B cell (primary cell): ENCODE measurements at regions of chr6 and their contacts with region 1.

Region 1: DNA sequence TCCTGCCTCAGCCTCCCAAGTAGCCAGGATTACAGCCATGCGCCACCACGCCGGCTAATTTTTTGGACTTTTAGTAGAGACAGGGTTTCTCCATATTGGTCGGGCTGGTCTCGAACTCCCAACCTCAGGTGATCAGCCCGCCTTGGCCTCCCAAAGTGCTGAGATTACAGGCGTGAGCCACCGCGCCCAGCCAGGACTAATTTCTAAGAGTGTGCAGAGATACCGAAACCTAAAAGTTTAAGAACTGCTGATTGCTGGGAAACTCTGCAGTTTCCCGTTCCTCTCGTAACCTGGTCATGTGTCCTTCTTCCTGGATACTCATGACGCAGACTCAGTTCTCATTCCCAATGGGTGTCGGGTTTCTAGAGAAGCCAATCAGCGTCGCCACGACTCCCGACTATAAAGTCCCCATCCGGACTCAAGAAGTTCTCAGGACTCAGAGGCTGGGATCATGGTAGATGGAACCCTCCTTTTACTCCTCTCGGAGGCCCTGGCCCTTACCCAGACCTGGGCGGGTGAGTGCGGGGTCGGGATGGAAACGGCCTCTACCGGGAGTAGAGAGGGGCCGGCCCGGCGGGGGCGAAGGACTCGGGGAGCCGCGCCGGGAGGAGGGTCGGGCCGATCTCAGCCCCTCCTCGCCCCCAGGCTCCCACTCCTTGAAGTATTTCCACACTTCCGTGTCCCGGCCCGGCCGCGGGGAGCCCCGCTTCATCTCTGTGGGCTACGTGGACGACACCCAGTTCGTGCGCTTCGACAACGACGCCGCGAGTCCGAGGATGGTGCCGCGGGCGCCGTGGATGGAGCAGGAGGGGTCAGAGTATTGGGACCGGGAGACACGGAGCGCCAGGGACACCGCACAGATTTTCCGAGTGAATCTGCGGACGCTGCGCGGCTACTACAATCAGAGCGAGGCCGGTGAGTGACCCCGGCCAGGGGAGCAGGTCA is at the start of gene HLA-E:
- DNase-seq: peak; percentile 98
- ATAC-seq: peak; percentile 84
- H3K4me3 ChIP-seq: peak within 1 kb of the TSS; percentile 99 to 100 (median 100)
- H3K4me3 Mint-ChIP-seq: peak within 1 kb of the TSS; percentile 99
- H3K27ac ChIP-seq: peak within 1 kb of the TSS; percentile 97 to 98
- H3K27ac Mint-ChIP-seq: peak within 1 kb of the TSS; percentile 98
- H3K4me1 ChIP-seq: peaks cover 38 to 50% of the 10 kb centered on the region in 2 donors
- H3K4me1 Mint-ChIP-seq: peaks cover 56% of the 10 kb centered on the region
- H3K27me3 ChIP-seq: no peaks in the 10 kb centered on the region
- H3K27me3 Mint-ChIP-seq: no peaks in the 10 kb centered on the region
- CTCF ChIP-seq: no peak
- total RNA-seq, gene HLA-E: 1,023 and 1,043 TPM in 2 replicates

Region 2: DNA sequence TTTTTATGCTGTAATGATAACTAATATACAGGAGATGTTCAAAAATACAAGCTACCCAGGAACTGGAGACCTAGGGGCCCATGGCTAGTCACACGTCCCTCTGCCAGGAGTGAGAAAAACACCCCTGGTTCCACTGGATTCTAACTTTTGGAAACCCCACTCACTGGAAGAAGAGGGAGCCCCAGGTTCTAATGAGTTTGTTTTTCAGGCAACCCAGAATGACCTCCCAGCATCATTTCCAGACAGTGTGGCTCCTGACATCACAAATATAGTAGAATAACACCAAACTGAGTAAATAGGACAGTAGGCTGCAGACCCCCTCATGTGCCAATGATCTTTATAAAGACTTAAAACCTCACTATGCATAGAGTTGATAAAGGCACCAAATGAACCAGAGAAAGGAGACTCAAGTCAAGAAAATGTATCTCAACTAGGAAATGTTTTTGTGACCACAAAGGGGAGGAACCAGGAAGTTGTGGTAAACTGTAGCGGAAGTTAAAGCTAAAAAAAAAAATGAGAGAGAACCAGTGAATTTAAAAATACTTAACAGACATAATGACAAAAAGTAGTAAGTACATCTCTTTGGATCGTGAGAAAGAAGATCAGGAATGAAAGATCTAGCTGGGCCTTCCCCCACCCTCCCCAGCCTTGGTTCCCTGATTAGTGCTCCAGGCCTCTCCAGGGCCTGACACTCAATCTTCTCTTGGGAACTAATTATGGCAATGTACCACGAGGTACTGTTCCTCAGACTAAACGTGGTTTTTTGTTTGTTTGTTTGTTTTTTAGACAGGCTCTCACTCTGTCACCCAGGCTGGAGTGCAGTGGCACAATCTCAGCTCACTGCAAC is 19.8 kb after region 1 on chr6:
- CTCF ChIA-PET with region 1: interaction called, 45 read pairs
- POLR2A ChIA-PET with region 1: interaction called, 18 read pairs
- intact Hi-C with region 1: loop called (anchors 1 kb)
- DNase-seq: peak; percentile 84
- ATAC-seq: peak; percentile 62
- H3K4me3 ChIP-seq: peak overlapping the region; percentile 20 to 74 (median 46)
- H3K4me3 Mint-ChIP-seq: peak overlapping the region; percentile 68
- H3K27ac ChIP-seq: peak overlapping the region; percentile 73 to 74
- H3K27ac Mint-ChIP-seq: peak overlapping the region; percentile 84
- H3K4me1 ChIP-seq: peaks cover 76 to 83% of the 10 kb centered on the region in 2 donors
- H3K4me1 Mint-ChIP-seq: peaks cover 67% of the 10 kb centered on the region
- H3K27me3 ChIP-seq: no peaks in the 10 kb centered on the region
- H3K27me3 Mint-ChIP-seq: no peaks in the 10 kb centered on the region
- CTCF ChIP-seq: no peak

Region 3: DNA sequence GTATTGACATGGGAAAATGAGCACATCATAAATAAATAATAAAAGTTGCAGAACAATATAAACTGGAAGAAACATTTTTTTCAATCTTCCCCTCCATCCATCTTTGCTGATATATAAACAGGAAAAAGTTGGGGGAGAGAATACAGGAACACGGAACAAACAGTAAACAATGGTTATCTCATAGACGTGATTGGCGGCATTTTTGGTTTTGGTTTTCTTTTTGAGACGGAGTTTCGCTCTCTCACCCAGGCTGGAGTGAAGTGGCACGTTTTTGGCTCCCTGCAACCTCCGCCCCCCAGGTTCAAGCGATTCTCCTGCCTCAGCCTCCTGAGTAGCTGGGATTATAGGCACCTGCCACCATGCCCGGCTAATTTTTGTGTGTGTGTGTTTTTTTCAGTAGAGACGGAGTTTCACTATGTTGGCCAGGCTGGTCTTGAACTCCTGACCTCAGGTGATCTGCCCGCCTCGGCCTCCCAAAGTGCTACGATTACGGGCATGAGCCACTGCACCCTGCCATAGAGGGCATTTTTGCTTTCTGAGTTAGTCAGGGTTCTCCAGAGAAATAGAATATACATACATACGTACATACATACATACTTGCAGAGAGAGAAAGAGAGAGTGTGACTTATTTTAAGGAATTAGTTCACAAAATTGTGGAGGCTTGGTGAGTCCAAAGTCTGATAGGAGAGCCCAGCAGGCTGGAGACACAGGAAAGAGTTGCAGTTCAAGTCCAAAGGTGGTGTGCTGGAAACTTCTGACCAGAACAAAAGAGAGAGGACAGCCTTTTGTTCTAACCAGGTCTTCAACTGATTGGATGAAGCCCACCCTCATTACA is 44.3 kb after region 1 on chr6:
- CTCF ChIA-PET with region 1: interaction called, 681 read pairs
- POLR2A ChIA-PET with region 1: interaction called, 126 read pairs
- intact Hi-C with region 1: loop called (anchors 1 kb)
- DNase-seq: no peak
- ATAC-seq: no peak
- H3K4me3 ChIP-seq: no peak overlapping the region
- H3K4me3 Mint-ChIP-seq: peak overlapping the region; percentile 59
- H3K27ac ChIP-seq: no peak overlapping the region
- H3K27ac Mint-ChIP-seq: peak overlapping the region; percentile 50
- H3K4me1 ChIP-seq: peaks cover 28 to 38% of the 10 kb centered on the region in 2 donors
- H3K4me1 Mint-ChIP-seq: peaks cover 26% of the 10 kb centered on the region
- H3K27me3 ChIP-seq: no peaks in the 10 kb centered on the region
- H3K27me3 Mint-ChIP-seq: no peaks in the 10 kb centered on the region
- CTCF ChIP-seq: no peak

Region 4: DNA sequence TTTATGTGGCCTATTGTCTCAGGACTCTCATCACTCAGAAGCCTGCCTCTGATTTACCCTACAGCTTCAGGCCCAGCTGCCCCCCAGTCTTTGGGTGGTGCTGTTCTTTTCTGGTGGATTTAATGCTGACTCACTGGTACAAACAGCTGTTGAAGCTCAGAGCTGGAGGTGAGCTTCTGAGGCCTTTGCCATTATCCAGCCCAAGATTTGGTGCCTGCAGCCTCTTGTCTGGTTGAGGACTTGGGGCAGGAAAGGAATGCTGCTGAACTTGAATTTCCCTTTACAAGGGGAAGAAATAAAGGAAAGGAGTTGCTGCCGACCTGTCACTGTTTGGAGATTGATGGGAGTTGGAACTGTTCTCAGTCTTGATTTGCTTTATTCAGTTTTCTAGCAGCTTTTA is 101.6 kb after region 1 on chr6:
- CTCF ChIA-PET with region 1: interaction called, 295 read pairs
- POLR2A ChIA-PET with region 1: interaction called, 3 read pairs
- intact Hi-C with region 1: no loop called
- DNase-seq: no peak
- ATAC-seq: no peak
- H3K4me3 ChIP-seq: no peak overlapping the region
- H3K4me3 Mint-ChIP-seq: no peak overlapping the region
- H3K27ac ChIP-seq: no peak overlapping the region
- H3K27ac Mint-ChIP-seq: no peak overlapping the region
- H3K4me1 ChIP-seq: no peaks in the 10 kb centered on the region
- H3K4me1 Mint-ChIP-seq: no peaks in the 10 kb centered on the region
- H3K27me3 ChIP-seq: no peaks in the 10 kb centered on the region
- H3K27me3 Mint-ChIP-seq: no peaks in the 10 kb centered on the region
- CTCF ChIP-seq: no peak